Activated T-helper 2 cell treated with anti-CD3 and anti-CD28 coated beads, Interferon-gamma antibody, Interleukin-2, Interleukin-4, amounts not matched to agents 10 μg/mL and 5 μg/mL and 100 μg/mL, durations not matched to agents 14 hours and 24 hours and 36 hours (primary cell): ENCODE measurements at regions of chr1 and their contacts with region 1.

Region 1: GRCh38 chr1:161013488-161014230 is 7.3 kb downstream of the F11R start:
- DNase-seq: peak; percentile 62
- H3K4me3 Mint-ChIP-seq: peak overlapping the region; percentile 74
- H3K27ac Mint-ChIP-seq: peak overlapping the region; percentile 96
- H3K4me1 Mint-ChIP-seq: peaks cover 37% of the 10 kb centered on the region
- H3K27me3 Mint-ChIP-seq: no peaks in the 10 kb centered on the region

Region 2: DNA sequence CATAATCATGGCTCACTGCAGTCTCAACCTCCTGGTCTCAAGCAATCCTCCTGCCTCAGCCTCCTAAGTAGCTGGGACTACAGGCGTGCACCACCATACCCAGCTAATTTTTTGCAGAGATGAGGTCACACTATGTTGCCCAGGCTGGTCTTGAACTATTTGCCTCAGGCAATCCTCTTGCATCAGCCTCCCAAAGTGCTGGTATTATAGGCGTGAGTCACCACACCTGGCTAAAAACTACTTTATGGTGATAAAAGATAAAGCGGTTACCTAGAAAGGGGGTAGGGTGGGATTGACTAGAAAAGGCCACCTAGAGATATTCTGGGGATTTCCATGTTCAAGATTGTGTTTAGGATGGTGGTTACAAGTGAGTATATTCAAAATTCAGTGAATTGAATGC is 20.1 kb after region 1 on chr1:
- intact Hi-C with region 1: loop called (anchors 1 kb)
- DNase-seq: no peak
- H3K4me3 Mint-ChIP-seq: no peak overlapping the region
- H3K27ac Mint-ChIP-seq: no peak overlapping the region
- H3K4me1 Mint-ChIP-seq: peaks cover 27% of the 10 kb centered on the region
- H3K27me3 Mint-ChIP-seq: no peaks in the 10 kb centered on the region